ENCODE measurements at regions of chr17 and their contacts with region 1.

Region 1: DNA sequence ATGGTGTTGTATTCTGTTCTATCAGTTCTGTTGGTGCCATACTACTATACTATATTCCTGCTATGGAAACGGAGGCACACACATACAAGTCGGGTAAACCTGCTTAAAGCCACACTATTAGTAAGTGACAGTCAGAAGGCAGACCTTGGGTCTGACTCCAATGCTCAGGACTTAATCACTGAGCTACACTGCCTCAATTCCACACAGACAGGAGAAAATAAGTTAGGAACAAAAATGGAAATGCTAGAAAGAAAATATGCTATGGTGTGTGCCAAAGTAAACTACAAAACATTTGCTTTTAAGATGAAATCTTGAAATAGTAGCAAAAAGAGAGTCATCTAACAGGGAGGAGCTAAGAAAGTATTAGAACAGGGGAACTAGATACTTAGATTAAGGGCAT is 48.1 kb downstream of the MYO1D start:
- DNase-seq: no peak
- ATAC-seq: peak; percentile 16
- H3K4me3 ChIP-seq: peak overlapping the region; percentile 35
- H3K27ac ChIP-seq: peak overlapping the region; percentile 88
- H3K4me1 ChIP-seq: peaks cover 48% of the 10 kb centered on the region
- H3K27me3 ChIP-seq: no peaks in the 10 kb centered on the region
- CTCF ChIP-seq: no peak
- EP300 ChIP-seq: no peak
- POLR2A ChIP-seq: no peak
- RAD21 ChIP-seq: no peak

Region 2: DNA sequence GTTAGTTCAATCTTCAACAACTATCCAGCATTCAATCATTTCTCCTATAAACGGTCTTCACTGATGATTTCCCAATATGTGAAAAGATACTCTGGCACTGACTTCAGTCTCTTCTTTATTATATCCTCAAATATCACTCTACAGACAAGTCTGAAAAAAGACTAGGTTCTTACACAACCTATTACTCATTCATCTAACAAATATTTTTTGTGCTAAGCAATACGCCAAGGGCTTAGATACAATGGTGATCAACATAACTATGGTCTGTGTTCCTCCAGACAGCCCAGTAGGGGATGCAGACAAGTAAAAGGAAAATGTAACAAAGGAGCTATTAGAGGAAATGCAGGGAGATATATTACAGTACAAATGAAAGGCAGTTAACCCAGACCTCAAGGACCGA is 15.8 kb before region 1 on chr17:
- CTCF ChIA-PET with region 1: no interaction called
- POLR2A ChIA-PET with region 1: interaction called, 11 read pairs
- RAD21 ChIA-PET with region 1: interaction called, 5 read pairs
- SMC1A ChIA-PET with region 1: interaction called, 5 read pairs
- in situ Hi-C with region 1: no loop called
- intact Hi-C with region 1: no loop called
- DNase-seq: no peak
- ATAC-seq: no peak
- H3K4me3 ChIP-seq: no peak overlapping the region
- H3K27ac ChIP-seq: no peak overlapping the region
- H3K4me1 ChIP-seq: no peaks in the 10 kb centered on the region
- H3K27me3 ChIP-seq: no peaks in the 10 kb centered on the region
- CTCF ChIP-seq: no peak
- EP300 ChIP-seq: no peak
- POLR2A ChIP-seq: no peak
- RAD21 ChIP-seq: no peak

Region 3: DNA sequence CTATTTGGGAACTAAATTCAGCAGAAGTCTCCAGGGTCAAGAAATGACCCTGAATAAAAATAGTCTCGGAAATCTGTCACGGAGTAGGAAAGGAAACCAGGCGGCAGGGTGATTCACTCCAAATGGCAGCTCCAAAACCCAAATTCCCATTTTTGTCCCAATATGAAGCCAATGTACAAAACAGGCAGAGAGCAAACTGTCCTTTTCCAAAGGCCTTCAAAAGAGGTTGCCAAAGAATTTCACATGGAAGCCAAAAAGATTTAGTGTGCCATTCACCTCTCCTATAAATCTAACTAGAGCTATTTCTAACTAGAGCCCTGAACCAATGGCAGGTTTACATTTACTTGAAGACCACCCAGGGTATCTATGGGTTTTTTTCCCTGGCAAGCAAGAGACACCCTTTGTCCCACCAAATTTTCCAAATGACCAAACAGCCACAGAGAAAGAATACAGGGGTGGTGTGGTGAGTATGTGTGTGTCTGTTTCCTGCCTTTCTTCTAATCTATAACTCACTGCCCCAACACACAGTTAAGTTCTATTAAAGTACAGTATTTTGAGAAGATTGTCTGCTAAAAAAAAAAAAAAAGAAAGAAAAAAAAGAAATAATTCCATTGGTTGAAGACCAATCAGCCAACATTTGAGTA is 41.3 kb after region 1 on chr17:
- CTCF ChIA-PET with region 1: interaction called, 146 read pairs
- POLR2A ChIA-PET with region 1: interaction called, 36 read pairs
- RAD21 ChIA-PET with region 1: interaction called, 198 read pairs
- SMC1A ChIA-PET with region 1: interaction called, 231 read pairs
- in situ Hi-C with region 1: no loop called
- intact Hi-C with region 1: no loop called
- DNase-seq: no peak
- ATAC-seq: no peak
- H3K4me3 ChIP-seq: no peak overlapping the region
- H3K27ac ChIP-seq: no peak overlapping the region
- H3K4me1 ChIP-seq: no peaks in the 10 kb centered on the region
- H3K27me3 ChIP-seq: no peaks in the 10 kb centered on the region
- CTCF ChIP-seq: no peak
- EP300 ChIP-seq: no peak
- POLR2A ChIP-seq: no peak
- RAD21 ChIP-seq: no peak

Region 4: DNA sequence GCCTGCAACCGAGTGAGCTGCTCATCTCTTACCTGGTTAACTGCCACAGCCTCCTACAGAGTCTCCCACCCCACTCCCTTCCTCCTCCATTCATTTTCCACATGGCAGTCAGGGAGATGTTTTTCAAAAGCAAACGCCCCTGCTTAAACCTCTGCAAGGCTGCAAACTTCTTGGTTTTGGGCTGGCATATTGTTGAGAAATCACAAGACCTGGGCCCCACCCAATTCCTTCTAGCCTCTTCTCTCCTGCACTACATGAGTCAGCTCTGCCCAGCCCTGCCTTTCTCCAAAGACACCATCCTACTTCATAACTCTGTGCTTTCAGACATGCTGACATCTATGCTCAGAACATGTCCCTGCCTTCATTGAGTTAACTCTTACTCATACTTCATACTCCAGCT is 298.9 kb after region 1 on chr17:
- CTCF ChIA-PET with region 1: no interaction called
- POLR2A ChIA-PET with region 1: no interaction called
- RAD21 ChIA-PET with region 1: no interaction called
- SMC1A ChIA-PET with region 1: no interaction called
- in situ Hi-C with region 1: no loop called
- intact Hi-C with region 1: no loop called
- DNase-seq: no peak
- ATAC-seq: no peak
- H3K4me3 ChIP-seq: no peak overlapping the region
- H3K27ac ChIP-seq: no peak overlapping the region
- H3K4me1 ChIP-seq: no peaks in the 10 kb centered on the region
- H3K27me3 ChIP-seq: peaks cover 3 to 4% of the 10 kb centered on the region in 2 experiments; a peak in 3 of 4 replicates
- CTCF ChIP-seq: no peak
- EP300 ChIP-seq: no peak
- POLR2A ChIP-seq: no peak
- RAD21 ChIP-seq: no peak

Measured in GM12878 (cell line).